ENCODE measurements at regions of chr10 and their contacts with region 1.

Region 1: DNA sequence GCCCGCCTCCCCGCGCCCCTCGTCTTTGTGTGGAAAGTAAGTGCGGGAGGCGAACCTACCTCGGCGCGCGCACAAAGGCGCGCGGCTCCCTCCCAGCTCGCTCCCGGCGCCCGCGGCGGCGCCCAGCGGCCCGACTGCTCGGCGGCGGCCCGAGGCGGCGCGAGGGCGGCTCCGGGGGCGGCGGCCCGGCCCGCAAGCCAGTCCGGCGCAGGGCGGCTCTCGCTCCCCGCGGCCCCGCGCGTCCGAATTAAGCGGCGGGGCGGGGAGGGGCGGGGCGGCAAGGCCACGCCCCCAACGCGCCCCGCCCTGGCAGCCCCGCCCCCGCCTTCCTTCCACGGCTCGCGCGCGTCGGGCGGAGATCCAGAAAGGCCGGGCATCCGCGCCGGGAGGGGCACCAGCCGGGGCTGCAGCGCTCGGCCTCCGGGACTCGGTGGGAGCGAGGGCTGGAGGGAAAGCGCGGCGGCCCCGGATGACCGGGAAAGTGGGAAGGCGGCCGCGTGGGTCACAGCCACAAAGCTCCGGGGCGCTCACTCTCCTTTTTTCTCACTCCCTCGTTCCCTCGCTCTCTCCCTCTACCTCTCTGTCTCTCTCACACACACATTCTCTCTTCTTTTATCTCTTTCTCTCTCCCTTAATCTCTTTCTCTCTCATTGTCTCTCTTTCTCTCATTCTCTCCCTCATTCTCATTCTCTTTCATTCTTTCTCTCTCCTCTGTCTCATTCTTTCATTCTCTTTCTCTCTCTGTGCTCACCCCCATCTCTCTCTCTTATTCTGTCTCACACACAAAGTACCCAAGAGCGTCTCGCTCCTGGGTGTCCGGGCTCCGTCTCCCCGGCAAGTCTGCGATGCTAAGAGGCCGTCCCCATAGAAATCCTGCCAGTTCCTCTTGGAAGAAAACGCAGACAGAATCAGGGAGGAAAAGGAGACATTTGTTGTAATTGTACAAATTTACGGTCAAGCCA is 170.2 kb downstream of the FAM107B start:
- DNase-seq: peak; percentile 48 to 89 (median 70)
- ATAC-seq: peak; percentile 56
- H3K4me3 ChIP-seq: peak overlapping the region; percentile 65
- H3K4me3 Mint-ChIP-seq: peak overlapping the region; percentile 90
- H3K27ac ChIP-seq: peak overlapping the region in 1 of 2 donors; percentile 26
- H3K27ac Mint-ChIP-seq: peak overlapping the region; percentile 90
- H3K4me1 ChIP-seq: peaks cover 48% of the 10 kb centered on the region
- H3K4me1 Mint-ChIP-seq: peaks cover 57% of the 10 kb centered on the region
- H3K27me3 ChIP-seq: no peaks in the 10 kb centered on the region
- H3K27me3 Mint-ChIP-seq: no peaks in the 10 kb centered on the region
- CTCF ChIP-seq: no peak

Region 2: GRCh38 chr10:14507176-14507575 is 97.3 kb before region 1 on chr10:
- CTCF ChIA-PET with region 1: no interaction called
- POLR2A ChIA-PET with region 1: no interaction called
- intact Hi-C with region 1: loop called in 1 of 2 experiments (anchors 5 kb)
- DNase-seq: peak in 13 of 14 experiments; percentile 9 to 90 (median 48)
- ATAC-seq: peak; percentile 94
- H3K4me3 ChIP-seq: no peak overlapping the region
- H3K4me3 Mint-ChIP-seq: peak overlapping the region; percentile 76
- H3K27ac ChIP-seq: peak overlapping the region; percentile 53 to 64
- H3K27ac Mint-ChIP-seq: peak overlapping the region; percentile 91
- H3K4me1 ChIP-seq: peaks cover 29% of the 10 kb centered on the region
- H3K4me1 Mint-ChIP-seq: peaks cover 41% of the 10 kb centered on the region
- H3K27me3 ChIP-seq: no peaks in the 10 kb centered on the region
- H3K27me3 Mint-ChIP-seq: no peaks in the 10 kb centered on the region
- CTCF ChIP-seq: no peak

Region 3: DNA sequence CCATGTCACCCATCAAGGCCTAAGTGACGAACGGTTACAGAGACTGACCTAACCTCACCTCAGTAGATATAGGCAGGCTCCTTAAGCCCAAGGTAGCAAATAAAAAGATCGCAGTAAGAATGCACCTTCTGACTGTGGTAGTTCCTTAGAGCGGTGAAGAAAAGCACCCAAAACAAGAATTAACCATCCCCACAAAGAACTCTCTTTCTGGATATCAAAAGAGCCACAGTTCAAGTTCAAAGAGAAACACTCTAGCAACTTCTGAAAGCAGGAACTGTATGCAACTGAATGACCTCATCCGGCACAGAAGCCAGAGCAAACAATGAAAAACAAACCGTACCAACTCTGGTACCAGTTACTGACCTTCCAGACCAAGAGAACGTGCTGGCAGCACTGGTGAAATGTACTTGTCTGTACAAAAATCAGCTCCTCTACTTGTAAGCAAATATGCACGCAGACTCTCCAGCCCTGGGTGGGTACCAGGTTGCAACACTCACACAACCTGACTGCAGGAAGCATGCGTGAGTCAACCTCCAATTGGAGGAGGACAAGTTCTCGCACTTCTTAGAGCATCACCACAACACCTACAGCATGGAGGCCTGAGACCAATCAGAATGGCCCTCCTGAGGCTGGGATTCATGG is 32.5 kb before region 1 on chr10:
- CTCF ChIA-PET with region 1: no interaction called
- POLR2A ChIA-PET with region 1: interaction called, 4 read pairs
- intact Hi-C with region 1: loop called (anchors 2 to 5 kb)
- DNase-seq: peak; percentile 46 to 90 (median 64)
- ATAC-seq: peak; percentile 66
- H3K4me3 ChIP-seq: peak overlapping the region; percentile 65
- H3K4me3 Mint-ChIP-seq: peak overlapping the region; percentile 92
- H3K27ac ChIP-seq: peak overlapping the region; percentile 85 to 93
- H3K27ac Mint-ChIP-seq: peak overlapping the region; percentile 98
- H3K4me1 ChIP-seq: peaks cover 71% of the 10 kb centered on the region
- H3K4me1 Mint-ChIP-seq: peaks cover 96% of the 10 kb centered on the region
- H3K27me3 ChIP-seq: no peaks in the 10 kb centered on the region
- H3K27me3 Mint-ChIP-seq: no peaks in the 10 kb centered on the region
- CTCF ChIP-seq: no peak

Region 4: DNA sequence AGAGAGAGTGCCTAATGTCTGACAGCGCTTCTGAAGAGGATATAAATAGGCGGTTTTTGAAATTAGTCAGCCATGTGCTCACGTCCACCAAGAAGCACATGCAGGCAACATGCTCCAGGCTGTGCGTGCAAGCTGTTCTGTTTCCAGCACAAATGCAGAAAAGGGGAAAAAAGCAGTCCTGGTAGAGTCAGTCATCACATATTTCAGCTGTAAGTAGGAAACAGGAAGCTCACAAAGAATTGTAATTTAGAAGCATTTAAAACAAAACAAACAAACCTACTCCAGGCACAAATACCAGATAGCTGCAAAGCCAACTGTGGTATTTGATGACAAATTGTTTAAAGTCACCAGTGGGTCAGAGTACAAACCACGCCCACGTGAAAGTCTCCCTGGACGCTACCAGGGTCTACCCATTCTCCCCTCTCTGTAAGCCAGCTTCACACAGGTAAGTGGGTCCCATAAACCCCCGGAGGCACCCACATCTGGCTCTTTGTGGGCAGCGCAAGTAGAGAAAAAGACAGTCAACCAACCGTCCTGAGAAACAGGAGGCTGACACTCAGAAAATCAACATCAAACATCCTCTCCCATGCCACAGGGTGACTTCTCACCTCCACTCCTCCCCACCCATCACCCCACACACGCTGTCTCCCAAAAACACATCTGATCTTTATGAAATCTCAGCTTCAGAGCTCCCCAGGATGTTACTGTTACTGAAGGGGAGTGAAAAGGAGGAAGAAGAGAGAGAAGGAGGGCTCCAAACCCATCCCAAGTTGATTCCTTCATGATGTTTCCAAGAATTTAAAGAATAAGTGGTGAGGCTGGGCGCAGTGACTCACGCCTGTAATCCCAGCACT is 16.2 kb before region 1 on chr10:
- CTCF ChIA-PET with region 1: interaction called, 9 read pairs
- POLR2A ChIA-PET with region 1: interaction called, 14 read pairs
- intact Hi-C with region 1: loop called (anchors 1 to 2 kb)
- DNase-seq: peak in 5 of 14 experiments; percentile 44 to 84 (median 67)
- ATAC-seq: peak; percentile 33
- H3K4me3 ChIP-seq: peak overlapping the region; percentile 17
- H3K4me3 Mint-ChIP-seq: peak overlapping the region; percentile 87
- H3K27ac ChIP-seq: peak overlapping the region; percentile 90 to 95
- H3K27ac Mint-ChIP-seq: peak overlapping the region; percentile 97
- H3K4me1 ChIP-seq: peaks cover 82% of the 10 kb centered on the region
- H3K4me1 Mint-ChIP-seq: peaks cover 95% of the 10 kb centered on the region
- H3K27me3 ChIP-seq: no peaks in the 10 kb centered on the region
- H3K27me3 Mint-ChIP-seq: no peaks in the 10 kb centered on the region
- CTCF ChIP-seq: no peak

Region 5: DNA sequence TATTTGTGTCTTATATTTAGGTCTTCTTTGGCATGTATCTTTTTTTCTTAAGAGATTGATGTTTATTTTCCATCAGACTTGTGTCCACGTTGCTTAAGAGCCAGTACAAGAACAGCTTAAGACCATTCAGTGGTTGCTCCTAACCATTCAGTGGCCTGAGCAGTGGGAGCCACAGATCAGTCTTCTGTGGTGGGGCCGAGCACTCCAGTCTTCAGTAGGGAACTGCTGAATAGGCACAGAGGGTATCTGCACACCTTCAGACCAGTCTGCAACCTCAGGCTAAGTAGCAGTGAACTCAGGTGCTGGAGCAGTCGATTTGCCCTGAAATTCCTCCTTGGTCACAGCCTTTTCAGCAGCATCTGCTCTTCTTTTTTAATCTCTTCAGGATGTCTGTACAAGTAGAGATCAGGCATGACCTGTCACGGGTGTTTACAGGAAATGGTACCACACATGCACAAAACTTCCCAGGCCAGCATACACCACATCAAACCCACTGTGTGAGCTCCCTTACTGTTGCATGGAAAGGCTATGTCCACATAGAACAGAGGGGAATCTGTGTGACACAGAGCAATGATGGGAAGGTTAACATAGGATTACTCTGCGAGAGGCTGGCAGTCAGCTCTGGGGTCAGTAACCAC is 118.7 kb after region 1 on chr10:
- CTCF ChIA-PET with region 1: no interaction called
- POLR2A ChIA-PET with region 1: no interaction called
- intact Hi-C with region 1: loop called in 1 of 2 experiments (anchors 5 kb)
- DNase-seq: peak; percentile 9 to 81 (median 27)
- ATAC-seq: peak; percentile 92
- H3K4me3 ChIP-seq: no peak overlapping the region
- H3K4me3 Mint-ChIP-seq: peak overlapping the region; percentile 34
- H3K27ac ChIP-seq: peak overlapping the region in 1 of 2 donors; percentile 65
- H3K27ac Mint-ChIP-seq: peak overlapping the region; percentile 83
- H3K4me1 ChIP-seq: peaks cover 22% of the 10 kb centered on the region
- H3K4me1 Mint-ChIP-seq: peaks cover 38% of the 10 kb centered on the region
- H3K27me3 ChIP-seq: no peaks in the 10 kb centered on the region
- H3K27me3 Mint-ChIP-seq: no peaks in the 10 kb centered on the region
- CTCF ChIP-seq: no peak

Region 6: DNA sequence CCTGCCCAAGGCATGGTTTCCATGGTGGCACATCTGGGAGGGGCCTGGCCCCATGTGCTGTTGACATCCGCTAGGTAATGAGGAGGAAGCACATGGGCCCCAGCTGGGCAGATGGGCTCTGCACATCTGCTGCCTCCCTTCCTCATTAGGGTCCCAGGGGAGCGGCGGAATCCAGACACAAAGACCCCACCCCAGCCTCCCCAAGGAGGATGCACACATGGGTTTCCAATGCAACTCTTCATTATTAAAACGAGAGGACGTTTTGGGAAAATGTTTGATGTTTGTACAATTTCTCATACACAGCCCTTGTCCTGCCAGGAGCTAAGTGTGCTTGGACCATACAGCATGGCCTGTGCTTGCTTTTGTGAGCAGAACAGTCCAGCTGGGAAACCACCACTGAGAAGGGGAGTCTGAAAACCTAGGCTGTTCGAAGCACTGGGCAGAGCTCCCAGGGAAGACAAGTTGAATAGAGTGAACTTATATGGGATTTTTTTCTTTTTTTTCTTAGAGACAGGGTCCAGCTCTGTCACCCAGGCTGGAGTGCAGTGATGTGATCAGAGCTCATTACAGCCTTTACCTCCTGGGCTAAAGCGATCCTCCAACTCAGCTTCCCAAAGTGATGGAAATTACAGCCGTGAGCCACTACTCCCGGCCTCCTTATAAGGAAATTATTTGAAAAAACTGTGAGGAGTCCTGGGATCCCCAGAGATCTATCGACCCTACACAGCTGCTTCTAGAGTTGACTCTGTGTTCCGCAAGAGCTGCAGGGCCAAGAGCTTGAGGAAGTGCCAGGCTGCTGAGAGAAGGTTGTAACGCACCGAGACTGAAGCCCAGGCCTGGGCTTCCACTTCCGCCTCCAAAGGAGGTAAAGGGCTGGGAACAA is 146.8 kb after region 1 on chr10:
- CTCF ChIA-PET with region 1: no interaction called
- POLR2A ChIA-PET with region 1: no interaction called
- intact Hi-C with region 1: no loop called
- DNase-seq: no peak
- ATAC-seq: no peak
- H3K4me3 ChIP-seq: no peak overlapping the region
- H3K4me3 Mint-ChIP-seq: no peak overlapping the region
- H3K27ac ChIP-seq: no peak overlapping the region
- H3K27ac Mint-ChIP-seq: no peak overlapping the region
- H3K4me1 ChIP-seq: no peaks in the 10 kb centered on the region
- H3K4me1 Mint-ChIP-seq: no peaks in the 10 kb centered on the region
- H3K27me3 ChIP-seq: no peaks in the 10 kb centered on the region
- H3K27me3 Mint-ChIP-seq: no peaks in the 10 kb centered on the region
- CTCF ChIP-seq: no peak